Dendritic cell treated with granulocyte-macrophage colony-stimulating factor and Interleukin-4, amounts not matched to agents 40 ng/mL and 50 ng/mL, for 4 days (primary cell): ENCODE measurements at regions of chr20 and their contacts with region 1.

Region 1: GRCh38 chr20:4607287-4607713 is 114.4 kb upstream of the PRND start:
- H3K4me3 Mint-ChIP-seq: no peak overlapping the region
- H3K27ac Mint-ChIP-seq: peak overlapping the region; percentile 13
- H3K4me1 Mint-ChIP-seq: peaks cover 33% of the 10 kb centered on the region
- H3K27me3 Mint-ChIP-seq: peaks cover 6% of the 10 kb centered on the region

Region 2: GRCh38 chr20:4720041-4720976 is 113.0 kb after region 1 on chr20:
- intact Hi-C with region 1: loop called (anchors 1 kb)
- H3K4me3 Mint-ChIP-seq: peak overlapping the region; percentile 58
- H3K27ac Mint-ChIP-seq: peak overlapping the region; percentile 96
- H3K4me1 Mint-ChIP-seq: peaks cover 33% of the 10 kb centered on the region
- H3K27me3 Mint-ChIP-seq: peaks cover 5% of the 10 kb centered on the region

Region 3: DNA sequence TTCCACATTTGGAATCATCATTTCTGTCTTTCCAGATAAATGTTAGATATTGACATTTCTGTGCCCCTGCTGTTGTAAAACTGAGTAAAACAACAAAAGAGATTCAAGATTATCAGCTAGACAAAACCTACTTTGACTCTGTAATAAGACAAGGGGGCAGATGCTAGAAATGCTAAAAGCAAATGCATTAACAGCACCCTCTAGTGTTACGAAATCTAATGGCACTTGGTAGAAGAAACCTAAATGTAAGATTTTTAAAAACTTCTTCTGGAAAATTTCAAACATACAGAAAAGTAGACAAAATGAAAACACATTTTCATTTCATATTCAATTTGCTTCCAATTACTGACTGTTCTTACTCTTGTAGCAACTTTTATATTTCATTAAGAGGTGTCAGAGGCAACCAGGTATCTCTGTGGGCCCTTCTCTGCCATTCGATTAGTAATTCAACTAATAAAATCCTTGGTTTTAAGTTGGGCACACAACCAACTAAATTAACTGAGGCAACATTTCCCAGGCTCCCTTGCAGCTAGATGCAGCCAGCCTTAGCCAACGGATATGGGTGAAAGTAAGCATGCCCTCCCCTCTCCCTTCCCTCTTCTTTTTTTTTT is 349.0 kb after region 1 on chr20:
- intact Hi-C with region 1: loop called (anchors 10 kb)
- H3K4me3 Mint-ChIP-seq: no peak overlapping the region
- H3K27ac Mint-ChIP-seq: no peak overlapping the region
- H3K4me1 Mint-ChIP-seq: peaks cover 20% of the 10 kb centered on the region
- H3K27me3 Mint-ChIP-seq: no peaks in the 10 kb centered on the region

Region 4: DNA sequence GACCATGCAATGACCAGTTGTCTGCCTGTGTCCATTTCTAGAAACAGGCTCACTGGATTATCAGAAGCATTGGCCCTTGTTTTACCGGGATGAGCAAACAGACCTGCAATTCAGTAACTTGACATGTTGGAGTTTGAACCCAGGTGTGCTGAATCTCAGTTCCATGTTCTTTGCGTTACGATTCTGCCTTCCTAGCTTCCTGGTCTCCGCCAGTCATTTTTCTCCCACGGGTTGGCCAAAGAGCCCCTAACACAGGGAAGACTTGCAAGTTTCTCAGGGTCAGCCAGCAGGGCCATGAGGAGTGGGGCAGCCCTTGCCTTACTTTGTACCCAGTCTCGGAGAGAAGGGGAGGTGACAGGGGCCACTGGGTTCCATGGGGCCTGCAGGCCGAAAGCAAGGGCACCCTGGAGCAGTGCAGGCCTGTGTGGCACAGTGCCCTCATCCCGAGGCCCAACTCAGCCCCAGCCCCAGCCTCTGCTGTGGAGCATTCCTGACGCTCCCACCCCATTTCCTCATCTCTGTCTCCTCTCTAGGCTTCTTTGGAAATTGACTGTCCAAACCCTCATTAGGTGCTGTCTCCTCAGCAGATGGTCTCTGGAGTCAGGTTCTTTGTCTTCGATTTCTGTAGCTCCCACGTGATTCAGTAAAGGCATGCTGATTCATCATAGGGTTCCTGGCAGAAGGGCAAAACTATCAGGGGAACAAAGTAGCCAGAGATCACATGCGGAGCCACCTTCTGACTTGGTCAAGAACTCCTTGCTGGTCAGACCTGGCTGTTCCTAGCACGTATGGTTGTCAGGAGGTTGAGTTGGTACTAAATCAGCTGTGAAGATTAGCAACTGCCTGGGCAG is 543.2 kb after region 1 on chr20:
- intact Hi-C with region 1: no loop called
- H3K4me3 Mint-ChIP-seq: no peak overlapping the region
- H3K27ac Mint-ChIP-seq: peak overlapping the region; percentile 41
- H3K4me1 Mint-ChIP-seq: peaks cover 79% of the 10 kb centered on the region
- H3K27me3 Mint-ChIP-seq: no peaks in the 10 kb centered on the region